ENCODE measurements at regions of chr7 and their contacts with region 1.

Region 1: GRCh38 chr7:28020302-28020940 is 160.2 kb downstream of the JAZF1 start:
- DNase-seq: peak; percentile 55
- ATAC-seq: peak; percentile 80
- H3K4me3 Mint-ChIP-seq: no peak overlapping the region
- H3K27ac Mint-ChIP-seq: no peak overlapping the region
- H3K4me1 Mint-ChIP-seq: peaks cover 6% of the 10 kb centered on the region
- H3K27me3 Mint-ChIP-seq: no peaks in the 10 kb centered on the region

Region 2: GRCh38 chr7:27774717-27775328 is 245.6 kb before region 1 on chr7:
- CTCF ChIA-PET with region 1: interaction called, 12 read pairs
- DNase-seq: no peak
- ATAC-seq: no peak
- H3K4me3 Mint-ChIP-seq: no peak overlapping the region
- H3K27ac Mint-ChIP-seq: no peak overlapping the region
- H3K4me1 Mint-ChIP-seq: peaks cover 3% of the 10 kb centered on the region
- H3K27me3 Mint-ChIP-seq: no peaks in the 10 kb centered on the region

Region 3: GRCh38 chr7:27933671-27934565 is 86.5 kb before region 1 on chr7:
- CTCF ChIA-PET with region 1: interaction called, 11 read pairs
- DNase-seq: no peak
- ATAC-seq: no peak
- H3K4me3 Mint-ChIP-seq: no peak overlapping the region
- H3K27ac Mint-ChIP-seq: no peak overlapping the region
- H3K4me1 Mint-ChIP-seq: peaks cover 6% of the 10 kb centered on the region
- H3K27me3 Mint-ChIP-seq: no peaks in the 10 kb centered on the region

Region 4: GRCh38 chr7:28005075-28005846 is 15.2 kb before region 1 on chr7:
- CTCF ChIA-PET with region 1: interaction called, 13 read pairs
- DNase-seq: no peak
- ATAC-seq: no peak
- H3K4me3 Mint-ChIP-seq: no peak overlapping the region
- H3K27ac Mint-ChIP-seq: no peak overlapping the region
- H3K4me1 Mint-ChIP-seq: peaks cover 11% of the 10 kb centered on the region
- H3K27me3 Mint-ChIP-seq: no peaks in the 10 kb centered on the region

Region 5: GRCh38 chr7:28032738-28033380 is 12.4 kb after region 1 on chr7:
- CTCF ChIA-PET with region 1: interaction called, 12 read pairs
- DNase-seq: no peak
- ATAC-seq: no peak
- H3K4me3 Mint-ChIP-seq: no peak overlapping the region
- H3K27ac Mint-ChIP-seq: no peak overlapping the region
- H3K4me1 Mint-ChIP-seq: peaks cover 37% of the 10 kb centered on the region
- H3K27me3 Mint-ChIP-seq: no peaks in the 10 kb centered on the region

Region 6: DNA sequence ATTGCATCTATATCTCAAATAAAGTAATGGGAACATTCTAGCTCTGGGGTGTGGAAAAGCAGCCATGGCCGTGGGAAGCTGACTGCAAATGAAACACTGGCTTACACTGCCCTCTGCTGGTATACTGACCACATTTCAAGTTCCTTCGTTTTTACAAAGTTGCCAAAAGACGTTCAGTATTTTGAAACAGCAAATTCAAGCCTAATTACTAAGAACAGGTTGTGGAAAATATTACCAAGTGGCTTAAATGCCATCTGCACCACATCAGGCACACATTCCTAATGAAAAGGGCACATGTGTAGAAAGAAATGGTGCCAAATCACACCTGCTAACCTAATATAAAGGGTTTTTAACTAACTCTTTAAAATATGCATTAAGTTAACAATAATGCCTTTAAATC is 76.3 kb after region 1 on chr7:
- CTCF ChIA-PET with region 1: interaction called, 16 read pairs
- DNase-seq: no peak
- ATAC-seq: peak; percentile 42
- H3K4me3 Mint-ChIP-seq: no peak overlapping the region
- H3K27ac Mint-ChIP-seq: no peak overlapping the region
- H3K4me1 Mint-ChIP-seq: no peaks in the 10 kb centered on the region
- H3K27me3 Mint-ChIP-seq: no peaks in the 10 kb centered on the region

Measured in activated CD8-positive, alpha-beta memory T cell treated with anti-CD3 and anti-CD28 coated beads, Interleukin-2, amount 10 ng/mL, durations not matched to agents 7 days and 5 days (primary cell).